Heart right ventricle (tissue), 16 donors: ENCODE measurements at regions of chr6 and their contacts with region 1.

Region 1: DNA sequence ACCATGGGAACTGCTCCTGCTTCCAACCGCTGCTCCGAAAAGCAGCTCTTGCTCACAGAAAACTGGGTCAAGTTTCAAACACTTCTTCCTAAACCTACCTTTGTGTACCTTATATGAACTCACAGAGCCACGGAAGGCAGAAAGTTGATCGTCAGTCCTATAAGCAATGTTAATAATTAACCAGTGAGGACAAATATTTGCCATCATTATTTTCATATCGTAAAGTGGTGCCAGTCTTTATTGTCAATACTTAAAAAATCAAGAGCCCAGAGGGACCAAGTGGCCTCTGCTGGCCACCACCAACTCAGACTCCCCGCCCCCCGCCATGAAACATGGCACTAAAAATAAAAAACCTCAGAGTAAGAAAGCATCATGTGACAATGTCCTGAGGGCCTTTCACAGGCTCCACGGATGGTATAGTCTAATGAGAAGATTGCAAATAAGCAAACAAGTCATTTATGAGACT is 9.1 kb upstream of the PBOV1 start:
- DNase-seq: no peak
- ATAC-seq: no peak
- H3K4me3 ChIP-seq: no peak overlapping the region
- H3K27ac ChIP-seq: no peak overlapping the region
- H3K4me1 ChIP-seq: no peaks in the 10 kb centered on the region
- H3K27me3 ChIP-seq: no peaks in the 10 kb centered on the region
- CTCF ChIP-seq: no peak

Region 2: DNA sequence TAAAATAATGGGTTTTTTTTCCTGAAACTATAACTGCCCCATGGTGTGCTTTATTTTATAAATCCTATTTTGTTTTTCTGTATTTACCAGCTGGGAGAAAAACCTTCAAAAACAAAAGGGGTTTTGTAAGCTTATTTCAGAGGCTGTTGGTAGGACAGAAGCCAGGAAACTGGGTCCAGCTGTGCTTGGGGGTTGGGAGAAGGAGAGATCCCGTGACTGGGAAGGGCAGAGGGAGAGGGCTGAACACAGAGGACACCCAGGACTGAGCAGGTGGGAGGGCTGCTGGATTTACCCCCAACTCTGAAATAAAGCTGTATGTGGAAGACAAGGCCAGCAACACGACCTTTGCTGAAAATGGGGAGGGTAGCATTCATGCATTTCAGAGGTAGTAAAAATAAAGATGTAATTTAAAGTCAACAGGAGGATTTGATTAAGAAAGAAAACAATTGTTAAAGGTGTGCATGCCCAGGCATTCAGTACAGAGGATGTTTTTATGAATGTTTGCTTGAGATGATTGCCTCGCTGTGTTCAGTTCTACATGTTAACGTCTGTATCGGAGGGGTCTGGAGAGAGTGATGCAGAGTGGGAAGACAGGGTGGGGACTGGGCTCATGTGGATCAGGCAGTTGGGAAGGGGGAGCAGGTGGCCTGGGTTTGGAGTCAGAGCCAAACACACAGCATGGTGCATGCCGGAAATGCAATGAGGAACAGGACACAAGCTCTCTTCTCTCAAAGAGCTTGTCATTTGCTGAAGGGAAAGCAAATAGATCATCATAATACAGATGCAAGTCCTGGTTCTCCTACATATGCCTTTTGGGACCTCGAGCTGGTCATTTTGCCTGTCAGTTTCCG is 44.2 kb before region 1 on chr6:
- intact Hi-C with region 1: loop called in 1 of 10 experiments (anchors 2 kb)
- DNase-seq: no peak
- ATAC-seq: peak in 3 of 8 donors; percentile 48 to 63 (median 56)
- H3K4me3 ChIP-seq: no peak overlapping the region
- H3K27ac ChIP-seq: no peak overlapping the region
- H3K4me1 ChIP-seq: peaks cover 0 to 5% (median 0%) of the 10 kb centered on the region in 9 donors
- H3K27me3 ChIP-seq: no peaks in the 10 kb centered on the region
- CTCF ChIP-seq: no peak